Heart left ventricle (tissue), 16 donors: ENCODE measurements at regions of chr3 and their contacts with region 1.

Region 1: GRCh38 chr3:170322566-170323331 is 34.8 kb upstream of the SKIL start:
- DNase-seq: no peak
- ATAC-seq: no peak
- H3K4me3 ChIP-seq: no peak overlapping the region
- H3K27ac ChIP-seq: no peak overlapping the region
- H3K4me1 ChIP-seq: peaks cover 0 to 7% (median 0%) of the 10 kb centered on the region in 12 donors
- H3K27me3 ChIP-seq: no peaks in the 10 kb centered on the region
- CTCF ChIP-seq: no peak
- POLR2A ChIP-seq: no peak

Region 2: DNA sequence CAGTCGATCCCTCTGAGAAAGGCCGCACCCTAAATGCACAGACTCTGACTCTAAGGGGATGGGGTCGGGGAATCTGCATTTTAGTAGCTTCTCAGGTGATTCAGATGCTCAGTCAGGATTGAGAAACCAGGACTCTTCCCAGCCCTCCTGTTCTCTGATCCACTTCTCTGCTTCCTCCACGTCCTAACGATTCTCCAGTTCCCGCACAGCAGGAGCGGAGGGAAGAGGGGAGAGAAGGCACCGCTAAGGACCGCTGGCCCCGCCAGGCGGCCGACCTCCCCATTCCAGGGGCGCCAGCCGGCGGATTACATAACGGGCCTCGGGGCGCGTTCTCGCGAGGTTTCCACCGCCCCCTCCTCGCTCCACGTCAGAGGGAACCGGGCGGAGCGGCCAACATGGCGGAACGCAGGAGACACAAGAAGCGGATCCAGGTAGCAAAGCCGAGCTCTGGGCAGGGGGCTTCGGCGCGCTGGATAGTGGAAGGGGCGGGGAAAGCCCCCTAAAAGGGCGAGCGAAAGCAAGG is 356.3 kb before region 1 on chr3 and contains the start of gene SEC62:
- intact Hi-C with region 1: no loop called
- DNase-seq: peak; percentile 95 to 98 (median 96)
- ATAC-seq: peak; percentile 98 to 99 (median 98)
- H3K4me3 ChIP-seq: peak within 1 kb of the TSS; percentile 65 to 99 (median 84)
- H3K27ac ChIP-seq: peak within 1 kb of the TSS; percentile 90 to 99 (median 94)
- H3K4me1 ChIP-seq: peaks cover 2 to 47% (median 35%) of the 10 kb centered on the region in 12 donors
- H3K27me3 ChIP-seq: no peaks in the 10 kb centered on the region
- CTCF ChIP-seq: peak; percentile 24 to 76 (median 47)
- POLR2A ChIP-seq: peak in 1 of 2 donors; percentile 83
- total RNA-seq, gene SEC62: 29.5 to 104 (median 75.2) TPM

Region 3: GRCh38 chr3:170296703-170297102 is 26.0 kb before region 1 on chr3:
- intact Hi-C with region 1: no loop called
- DNase-seq: no peak
- ATAC-seq: no peak
- H3K4me3 ChIP-seq: no peak overlapping the region
- H3K27ac ChIP-seq: no peak overlapping the region
- H3K4me1 ChIP-seq: peaks cover 0 to 6% (median 0%) of the 10 kb centered on the region in 12 donors
- H3K27me3 ChIP-seq: no peaks in the 10 kb centered on the region
- CTCF ChIP-seq: no peak
- POLR2A ChIP-seq: no peak

Region 4: GRCh38 chr3:170337420-170337819 is 14.7 kb after region 1 on chr3:
- intact Hi-C with region 1: loop called in 1 of 10 experiments (anchors 1 kb)
- DNase-seq: no peak
- ATAC-seq: no peak
- H3K4me3 ChIP-seq: no peak overlapping the region
- H3K27ac ChIP-seq: no peak overlapping the region
- H3K4me1 ChIP-seq: no peaks in the 10 kb centered on the region
- H3K27me3 ChIP-seq: no peaks in the 10 kb centered on the region
- CTCF ChIP-seq: no peak
- POLR2A ChIP-seq: no peak

Region 5: DNA sequence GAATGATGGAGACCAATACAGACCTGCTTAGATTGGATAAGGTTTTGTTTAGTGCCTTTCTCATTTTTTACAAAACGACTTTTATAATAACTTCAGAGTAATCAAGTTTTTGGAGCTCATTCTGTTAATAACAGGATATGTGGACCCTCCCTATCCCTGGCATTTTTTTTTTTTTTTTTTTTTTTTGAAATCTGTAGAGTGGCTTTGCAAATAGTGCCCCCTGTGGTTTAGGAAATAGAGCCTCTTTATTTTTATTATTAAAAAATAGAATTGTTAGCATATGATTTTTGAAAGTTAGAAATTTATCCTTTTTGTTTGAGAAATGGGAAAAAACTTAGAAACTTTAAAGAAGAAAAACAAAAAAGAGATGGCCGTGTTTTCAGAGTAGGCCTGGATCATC is 46.2 kb after region 1 on chr3:
- intact Hi-C with region 1: loop called in 2 of 10 experiments (anchors 10 kb)
- DNase-seq: no peak
- ATAC-seq: no peak
- H3K4me3 ChIP-seq: no peak overlapping the region
- H3K27ac ChIP-seq: no peak overlapping the region
- H3K4me1 ChIP-seq: peaks cover 0 to 53% (median 16%) of the 10 kb centered on the region in 12 donors
- H3K27me3 ChIP-seq: no peaks in the 10 kb centered on the region
- CTCF ChIP-seq: peak; percentile 16 to 47 (median 26)
- POLR2A ChIP-seq: no peak

Region 6: DNA sequence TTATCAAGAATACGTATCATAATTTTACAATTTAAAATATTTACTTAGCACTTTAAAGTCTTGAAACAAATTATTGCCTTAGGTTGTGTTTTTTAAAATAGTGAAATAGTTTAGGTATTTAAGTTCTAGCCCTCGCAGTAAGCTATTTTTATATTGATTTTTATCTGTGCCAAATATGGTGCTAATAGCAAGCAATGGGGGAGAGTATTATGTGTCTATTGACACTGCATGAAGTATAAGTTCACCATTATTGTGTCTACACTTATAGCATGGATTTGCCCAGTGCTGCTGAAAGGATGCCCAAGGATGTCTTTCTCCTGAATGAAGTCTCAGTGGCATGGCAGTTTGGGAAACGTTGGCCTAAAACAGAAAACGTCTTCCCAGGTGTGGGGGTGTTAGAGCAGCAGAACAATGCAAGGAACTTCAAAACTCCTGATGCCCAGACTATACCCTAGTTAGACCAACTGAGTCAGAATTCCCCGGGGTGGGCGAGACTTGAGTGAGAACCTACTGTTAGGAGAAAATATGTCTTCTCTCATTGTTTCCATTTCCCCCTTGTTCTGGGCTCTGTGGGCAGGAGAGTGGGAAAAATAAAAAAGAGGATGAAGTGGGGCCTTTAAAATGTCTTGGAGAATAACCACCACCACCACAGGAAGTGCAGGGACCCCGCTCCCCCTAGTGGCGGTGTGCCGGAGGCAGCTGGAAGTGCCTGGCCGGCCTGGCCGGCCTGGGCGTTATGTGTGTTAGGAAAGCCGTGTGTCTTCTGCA is 367.3 kb after region 1 on chr3:
- intact Hi-C with region 1: loop called in 2 of 10 experiments (anchors 10 kb)
- DNase-seq: peak; percentile 44 to 83 (median 59)
- ATAC-seq: peak in 3 of 4 donors; percentile 76 to 89 (median 77)
- H3K4me3 ChIP-seq: no peak overlapping the region
- H3K27ac ChIP-seq: no peak overlapping the region
- H3K4me1 ChIP-seq: peaks cover 0 to 7% (median 0%) of the 10 kb centered on the region in 12 donors
- H3K27me3 ChIP-seq: no peaks in the 10 kb centered on the region
- CTCF ChIP-seq: peak; percentile 67 to 82 (median 74)
- POLR2A ChIP-seq: no peak